ENCODE measurements at regions of chr5 and their contacts with region 1.

Region 1: GRCh38 chr5:107726896-107727295 is 56.2 kb upstream of the EFNA5 start:
- DNase-seq: no peak
- ATAC-seq: no peak
- H3K4me3 ChIP-seq: no peak overlapping the region
- H3K27ac ChIP-seq: no peak overlapping the region
- H3K4me1 ChIP-seq: no peaks in the 10 kb centered on the region
- H3K27me3 ChIP-seq: no peaks in the 10 kb centered on the region
- CTCF ChIP-seq: no peak
- EP300 ChIP-seq: no peak
- POLR2A ChIP-seq: no peak
- RAD21 ChIP-seq: no peak

Region 2: GRCh38 chr5:107705402-107706014 is 21.4 kb before region 1 on chr5:
- CTCF ChIA-PET with region 1: no interaction called
- POLR2A ChIA-PET with region 1: no interaction called
- RAD21 ChIA-PET with region 1: no interaction called
- SMC1A ChIA-PET with region 1: interaction called, 4 read pairs
- in situ Hi-C with region 1: no loop called
- intact Hi-C with region 1: loop called (anchors 2 kb)
- DNase-seq: no peak
- ATAC-seq: no peak
- H3K4me3 ChIP-seq: no peak overlapping the region
- H3K27ac ChIP-seq: no peak overlapping the region
- H3K4me1 ChIP-seq: no peaks in the 10 kb centered on the region
- H3K27me3 ChIP-seq: no peaks in the 10 kb centered on the region
- CTCF ChIP-seq: no peak
- EP300 ChIP-seq: no peak
- POLR2A ChIP-seq: no peak
- RAD21 ChIP-seq: no peak

Region 3: GRCh38 chr5:108064302-108064701 is 337.4 kb after region 1 on chr5:
- CTCF ChIA-PET with region 1: no interaction called
- POLR2A ChIA-PET with region 1: no interaction called
- RAD21 ChIA-PET with region 1: no interaction called
- SMC1A ChIA-PET with region 1: no interaction called
- in situ Hi-C with region 1: no loop called
- intact Hi-C with region 1: no loop called
- DNase-seq: no peak
- ATAC-seq: no peak
- H3K4me3 ChIP-seq: no peak overlapping the region
- H3K27ac ChIP-seq: no peak overlapping the region
- H3K4me1 ChIP-seq: no peaks in the 10 kb centered on the region
- H3K27me3 ChIP-seq: no peaks in the 10 kb centered on the region
- CTCF ChIP-seq: no peak
- EP300 ChIP-seq: no peak
- POLR2A ChIP-seq: no peak
- RAD21 ChIP-seq: no peak